HEK293 (cell line): ENCODE measurements at regions of chr14 and their contacts with region 1.

Region 1: DNA sequence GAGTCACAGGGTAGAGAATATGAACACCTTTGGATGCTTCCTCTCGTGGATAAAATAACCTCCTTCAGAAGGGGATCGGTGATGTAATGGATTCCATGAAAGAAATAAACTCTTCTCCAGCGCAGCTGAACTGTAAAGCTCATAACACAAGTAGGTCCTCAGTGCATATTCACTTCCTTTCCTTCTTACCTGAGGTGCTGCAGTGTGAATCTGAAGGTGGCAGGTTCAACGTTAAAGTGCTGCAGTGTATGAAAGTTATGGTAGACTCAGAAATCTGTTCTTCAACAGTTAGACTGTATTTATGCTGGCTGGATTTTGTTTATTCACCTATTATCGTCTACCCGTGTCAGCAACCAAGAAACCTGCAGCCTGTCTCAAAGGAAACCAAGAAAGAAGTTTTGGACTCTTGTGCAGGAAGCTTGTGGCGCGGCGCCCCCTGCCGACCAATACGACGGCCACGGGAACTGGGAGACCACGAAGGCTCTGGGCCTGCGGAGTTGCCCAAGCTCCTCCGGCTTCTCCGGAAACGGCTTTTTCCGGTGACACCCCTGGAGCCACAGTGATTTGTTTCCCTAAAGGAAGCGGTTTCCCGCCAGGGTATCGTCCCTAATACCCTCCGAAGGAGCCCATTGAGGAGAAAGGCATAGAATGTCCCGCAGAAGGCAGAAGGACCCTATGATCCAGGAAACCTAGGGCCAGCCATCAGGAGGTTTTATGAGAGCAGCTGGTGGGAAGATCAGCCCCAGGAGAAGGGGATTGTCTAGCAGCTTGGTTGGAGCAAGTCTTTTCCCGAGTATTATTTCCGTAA is 17.6 kb upstream of the RNASE3 start:
- H3K4me3 ChIP-seq: no peak overlapping the region
- H3K27ac ChIP-seq: no peak overlapping the region
- H3K4me1 ChIP-seq: no peaks in the 10 kb centered on the region
- CTCF ChIP-seq: peak; percentile 41; the same call in 1 of the 2 replicates

Region 2: DNA sequence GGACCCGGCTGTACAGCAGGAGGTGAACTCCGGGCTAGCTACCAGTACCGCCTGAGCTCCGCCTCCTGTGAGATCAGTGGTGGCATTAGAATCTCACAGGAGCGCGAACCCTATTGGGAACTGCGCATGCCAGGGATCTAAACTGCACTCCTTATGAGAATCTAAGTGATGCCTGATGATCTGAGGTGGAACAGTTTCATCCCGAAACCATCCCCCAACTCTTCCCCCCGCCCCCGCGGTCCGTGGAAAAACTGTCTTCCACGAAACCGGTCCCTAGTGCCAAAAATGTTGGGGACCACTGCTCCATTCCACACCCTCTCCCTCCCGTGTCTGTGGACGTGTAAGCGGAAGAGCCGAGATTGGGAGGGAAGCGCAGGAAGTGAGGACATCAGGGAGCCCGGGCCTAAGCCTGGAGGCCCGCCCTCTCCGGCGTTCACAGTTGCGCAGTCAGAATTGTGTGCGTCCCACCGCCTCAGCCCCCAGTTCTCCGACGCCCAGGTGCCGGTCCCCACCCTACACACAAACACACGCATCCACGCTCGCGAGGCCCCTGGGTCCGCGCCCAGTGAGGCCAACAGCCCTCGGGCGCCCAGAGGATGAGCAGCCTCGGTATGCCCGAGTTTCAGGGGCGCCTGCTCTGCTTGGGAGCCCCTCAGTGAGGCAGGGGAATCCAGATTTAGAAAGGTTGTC is 191.0 kb before region 1 on chr14:
- CTCF ChIA-PET with region 1: no interaction called
- POLR2A ChIA-PET with region 1: no interaction called
- H3K4me3 ChIP-seq: peak overlapping the region; percentile 68
- H3K27ac ChIP-seq: peak overlapping the region; percentile 96
- H3K4me1 ChIP-seq: no peaks in the 10 kb centered on the region; the same call in 1 of the 2 replicates
- CTCF ChIP-seq: no peak

Region 3: DNA sequence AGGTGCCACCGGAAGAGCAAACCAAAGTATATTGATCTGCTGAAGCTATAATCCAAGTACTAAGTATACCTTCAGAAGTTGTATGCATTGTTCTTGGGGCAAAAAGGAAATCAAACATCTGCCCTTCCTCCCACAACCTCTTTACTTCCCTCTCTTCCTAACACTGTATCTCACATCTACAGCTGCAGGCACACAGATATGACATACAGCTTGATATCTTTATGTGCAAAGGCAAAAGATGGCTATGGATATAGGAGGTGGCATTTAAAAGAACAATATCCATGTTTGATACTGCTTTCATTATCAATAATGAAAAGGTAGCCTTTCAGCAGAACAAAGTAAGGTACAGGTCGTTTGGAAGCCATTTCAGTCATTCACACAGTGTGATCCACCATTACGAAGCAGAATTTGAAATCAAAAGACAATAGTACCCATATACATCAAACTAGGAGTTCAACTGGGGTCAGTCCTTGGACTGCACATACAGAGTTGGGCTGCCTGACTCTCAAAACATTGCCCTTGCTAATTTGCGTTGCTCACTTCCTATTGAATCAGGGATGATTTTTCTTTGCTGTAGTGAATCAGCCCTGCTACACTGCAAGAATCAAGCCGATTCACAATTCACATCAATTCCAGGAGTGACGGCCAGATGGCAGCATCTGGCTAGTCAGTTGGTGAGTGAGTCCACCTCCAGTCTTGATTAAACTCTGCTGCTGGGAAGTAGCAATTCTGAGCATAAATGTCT is 176.1 kb before region 1 on chr14:
- CTCF ChIA-PET with region 1: interaction called, 14 read pairs
- POLR2A ChIA-PET with region 1: no interaction called
- H3K4me3 ChIP-seq: no peak overlapping the region
- H3K27ac ChIP-seq: no peak overlapping the region
- H3K4me1 ChIP-seq: no peaks in the 10 kb centered on the region
- CTCF ChIP-seq: peak; percentile 76

Region 4: DNA sequence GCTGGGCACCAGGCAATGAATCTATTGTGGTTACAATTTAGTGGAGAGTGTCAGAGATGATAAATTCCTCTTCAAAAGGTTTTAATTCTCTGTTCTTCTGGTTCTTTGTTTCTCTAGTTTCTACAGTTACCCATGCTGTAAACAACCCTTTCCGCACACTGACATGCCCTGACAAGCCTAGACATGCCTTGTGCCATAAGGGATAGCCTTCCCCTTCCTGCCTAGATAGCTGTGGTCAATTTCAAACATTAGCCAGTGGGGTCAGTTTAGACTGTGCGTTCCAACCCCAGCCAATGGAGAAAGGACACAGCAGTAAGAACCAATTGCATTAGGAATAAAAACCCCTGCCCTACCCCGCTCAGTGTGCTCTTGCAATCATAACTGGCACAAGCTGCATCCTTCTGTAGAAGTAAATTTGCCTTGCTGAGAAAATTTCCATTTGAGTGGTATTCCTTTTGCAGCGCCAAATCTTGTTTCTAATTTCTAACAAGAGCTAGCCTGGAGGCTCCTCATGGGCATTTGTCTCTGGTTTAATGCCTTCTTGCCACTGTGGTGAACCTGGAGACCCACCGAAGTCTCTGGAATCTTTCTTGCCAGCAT is 121.5 kb before region 1 on chr14:
- CTCF ChIA-PET with region 1: no interaction called
- POLR2A ChIA-PET with region 1: no interaction called
- H3K4me3 ChIP-seq: no peak overlapping the region
- H3K27ac ChIP-seq: no peak overlapping the region
- H3K4me1 ChIP-seq: no peaks in the 10 kb centered on the region
- CTCF ChIP-seq: no peak